ENCODE measurements at regions of chr18 and their contacts with region 1.

Region 1: GRCh38 chr18:76709659-76710645 is 112.4 kb upstream of the ZNF236 start:
- DNase-seq: peak; percentile 26 to 73 (median 47)
- H3K4me3 ChIP-seq: no peak overlapping the region
- H3K4me3 Mint-ChIP-seq: peak overlapping the region in 1 of 7 donors; percentile 45
- H3K27ac ChIP-seq: no peak overlapping the region
- H3K27ac Mint-ChIP-seq: peak overlapping the region in 1 of 8 donors; percentile 92
- H3K4me1 ChIP-seq: peaks cover 6% of the 10 kb centered on the region
- H3K4me1 Mint-ChIP-seq: peaks cover 3 to 9% (median 5%) of the 10 kb centered on the region in 3 donors
- H3K27me3 ChIP-seq: no peaks in the 10 kb centered on the region
- H3K27me3 Mint-ChIP-seq: peaks cover 0 to 2% of the 10 kb centered on the region in 2 donors

Region 2: GRCh38 chr18:76398896-76399612 is 310.9 kb before region 1 on chr18:
- CTCF ChIA-PET with region 1: interaction called, 83 read pairs
- POLR2A ChIA-PET with region 1: interaction called, 3 read pairs
- DNase-seq: peak; percentile 43 to 68 (median 57)
- H3K4me3 ChIP-seq: no peak overlapping the region
- H3K4me3 Mint-ChIP-seq: no peak overlapping the region
- H3K27ac ChIP-seq: no peak overlapping the region
- H3K27ac Mint-ChIP-seq: peak overlapping the region in 1 of 8 donors; percentile 29
- H3K4me1 ChIP-seq: peaks cover 5% of the 10 kb centered on the region
- H3K4me1 Mint-ChIP-seq: peaks cover 4 to 11% (median 5%) of the 10 kb centered on the region in 3 donors
- H3K27me3 ChIP-seq: no peaks in the 10 kb centered on the region
- H3K27me3 Mint-ChIP-seq: no peaks in the 10 kb centered on the region

Region 3: GRCh38 chr18:76405681-76406356 is 304.1 kb before region 1 on chr18:
- CTCF ChIA-PET with region 1: interaction called, 83 read pairs
- POLR2A ChIA-PET with region 1: no interaction called
- DNase-seq: peak in 3 of 5 donors; percentile 25 to 66 (median 35)
- H3K4me3 ChIP-seq: no peak overlapping the region
- H3K4me3 Mint-ChIP-seq: no peak overlapping the region
- H3K27ac ChIP-seq: no peak overlapping the region
- H3K27ac Mint-ChIP-seq: no peak overlapping the region
- H3K4me1 ChIP-seq: no peaks in the 10 kb centered on the region
- H3K4me1 Mint-ChIP-seq: peaks cover 0 to 10% (median 4%) of the 10 kb centered on the region in 3 donors
- H3K27me3 ChIP-seq: no peaks in the 10 kb centered on the region
- H3K27me3 Mint-ChIP-seq: peaks cover 0 to 20% of the 10 kb centered on the region in 2 donors

Region 4: GRCh38 chr18:76492669-76493212 is 217.2 kb before region 1 on chr18:
- CTCF ChIA-PET with region 1: no interaction called
- POLR2A ChIA-PET with region 1: no interaction called
- DNase-seq: peak; percentile 76 to 99 (median 88)
- H3K4me3 ChIP-seq: peak overlapping the region; percentile 84
- H3K4me3 Mint-ChIP-seq: peak overlapping the region; percentile 81 to 92 (median 88)
- H3K27ac ChIP-seq: no peak overlapping the region
- H3K27ac Mint-ChIP-seq: peak overlapping the region in 6 of 8 donors; percentile 9 to 93 (median 57)
- H3K4me1 ChIP-seq: peaks cover 7% of the 10 kb centered on the region
- H3K4me1 Mint-ChIP-seq: peaks cover 35 to 47% (median 36%) of the 10 kb centered on the region in 3 donors
- H3K27me3 ChIP-seq: peaks cover 7% of the 10 kb centered on the region
- H3K27me3 Mint-ChIP-seq: peaks cover 54 to 81% of the 10 kb centered on the region in 2 donors

Region 5: GRCh38 chr18:76697441-76697901 is 12.5 kb before region 1 on chr18:
- CTCF ChIA-PET with region 1: interaction called, 10 read pairs
- POLR2A ChIA-PET with region 1: no interaction called
- DNase-seq: no peak
- H3K4me3 ChIP-seq: no peak overlapping the region
- H3K4me3 Mint-ChIP-seq: no peak overlapping the region
- H3K27ac ChIP-seq: no peak overlapping the region
- H3K27ac Mint-ChIP-seq: peak overlapping the region in 1 of 8 donors; percentile 70
- H3K4me1 ChIP-seq: no peaks in the 10 kb centered on the region
- H3K4me1 Mint-ChIP-seq: peaks cover 2 to 5% (median 3%) of the 10 kb centered on the region in 3 donors
- H3K27me3 ChIP-seq: peaks cover 4% of the 10 kb centered on the region
- H3K27me3 Mint-ChIP-seq: peaks cover 30 to 58% of the 10 kb centered on the region in 2 donors

Region 6: GRCh38 chr18:76721207-76721996 is 11.4 kb after region 1 on chr18:
- CTCF ChIA-PET with region 1: interaction called, 12 read pairs
- POLR2A ChIA-PET with region 1: no interaction called
- DNase-seq: peak; percentile 28 to 86 (median 80)
- H3K4me3 ChIP-seq: peak overlapping the region; percentile 42
- H3K4me3 Mint-ChIP-seq: peak overlapping the region; percentile 37 to 87 (median 80)
- H3K27ac ChIP-seq: no peak overlapping the region
- H3K27ac Mint-ChIP-seq: peak overlapping the region; percentile 3 to 93 (median 73)
- H3K4me1 ChIP-seq: peaks cover 56% of the 10 kb centered on the region
- H3K4me1 Mint-ChIP-seq: peaks cover 46 to 58% (median 56%) of the 10 kb centered on the region in 3 donors
- H3K27me3 ChIP-seq: no peaks in the 10 kb centered on the region
- H3K27me3 Mint-ChIP-seq: peaks cover 0 to 6% of the 10 kb centered on the region in 2 donors

Region 7: GRCh38 chr18:76794326-76794725 is 84.4 kb after region 1 on chr18:
- CTCF ChIA-PET with region 1: no interaction called
- POLR2A ChIA-PET with region 1: no interaction called
- DNase-seq: no peak
- H3K4me3 ChIP-seq: no peak overlapping the region
- H3K4me3 Mint-ChIP-seq: no peak overlapping the region
- H3K27ac ChIP-seq: no peak overlapping the region
- H3K27ac Mint-ChIP-seq: peak overlapping the region in 1 of 8 donors; percentile 10
- H3K4me1 ChIP-seq: no peaks in the 10 kb centered on the region
- H3K4me1 Mint-ChIP-seq: peaks cover 0 to 1% (median 0%) of the 10 kb centered on the region in 3 donors
- H3K27me3 ChIP-seq: no peaks in the 10 kb centered on the region
- H3K27me3 Mint-ChIP-seq: peaks cover 14 to 26% of the 10 kb centered on the region in 2 donors